ENCODE measurements at regions of chr2 and their contacts with region 1.

Region 1: GRCh38 chr2:224922142-224922727 is 120.0 kb downstream of the DOCK10 start:
- DNase-seq: no peak
- ATAC-seq: peak; percentile 63
- H3K4me3 Mint-ChIP-seq: peak overlapping the region; percentile 46
- H3K27ac Mint-ChIP-seq: peak overlapping the region; percentile 79
- H3K4me1 Mint-ChIP-seq: peaks cover 58% of the 10 kb centered on the region
- H3K27me3 Mint-ChIP-seq: no peaks in the 10 kb centered on the region
- CTCF ChIP-seq: no peak

Region 2: GRCh38 chr2:224819075-224819474 is 103.2 kb before region 1 on chr2:
- CTCF ChIA-PET with region 1: no interaction called
- POLR2A ChIA-PET with region 1: no interaction called
- intact Hi-C with region 1: no loop called
- DNase-seq: no peak
- ATAC-seq: no peak
- H3K4me3 Mint-ChIP-seq: no peak overlapping the region
- H3K27ac Mint-ChIP-seq: no peak overlapping the region
- H3K4me1 Mint-ChIP-seq: peaks cover 1% of the 10 kb centered on the region
- H3K27me3 Mint-ChIP-seq: no peaks in the 10 kb centered on the region
- CTCF ChIP-seq: no peak

Region 3: GRCh38 chr2:224909885-224910573 is 12.2 kb before region 1 on chr2:
- CTCF ChIA-PET with region 1: interaction called, 3 read pairs
- POLR2A ChIA-PET with region 1: interaction called, 17 read pairs
- intact Hi-C with region 1: loop called (anchors 1 kb)
- DNase-seq: no peak
- ATAC-seq: peak; percentile 85
- H3K4me3 Mint-ChIP-seq: peak overlapping the region; percentile 30
- H3K27ac Mint-ChIP-seq: peak overlapping the region; percentile 82
- H3K4me1 Mint-ChIP-seq: peaks cover 46% of the 10 kb centered on the region
- H3K27me3 Mint-ChIP-seq: no peaks in the 10 kb centered on the region
- CTCF ChIP-seq: no peak

Region 4: DNA sequence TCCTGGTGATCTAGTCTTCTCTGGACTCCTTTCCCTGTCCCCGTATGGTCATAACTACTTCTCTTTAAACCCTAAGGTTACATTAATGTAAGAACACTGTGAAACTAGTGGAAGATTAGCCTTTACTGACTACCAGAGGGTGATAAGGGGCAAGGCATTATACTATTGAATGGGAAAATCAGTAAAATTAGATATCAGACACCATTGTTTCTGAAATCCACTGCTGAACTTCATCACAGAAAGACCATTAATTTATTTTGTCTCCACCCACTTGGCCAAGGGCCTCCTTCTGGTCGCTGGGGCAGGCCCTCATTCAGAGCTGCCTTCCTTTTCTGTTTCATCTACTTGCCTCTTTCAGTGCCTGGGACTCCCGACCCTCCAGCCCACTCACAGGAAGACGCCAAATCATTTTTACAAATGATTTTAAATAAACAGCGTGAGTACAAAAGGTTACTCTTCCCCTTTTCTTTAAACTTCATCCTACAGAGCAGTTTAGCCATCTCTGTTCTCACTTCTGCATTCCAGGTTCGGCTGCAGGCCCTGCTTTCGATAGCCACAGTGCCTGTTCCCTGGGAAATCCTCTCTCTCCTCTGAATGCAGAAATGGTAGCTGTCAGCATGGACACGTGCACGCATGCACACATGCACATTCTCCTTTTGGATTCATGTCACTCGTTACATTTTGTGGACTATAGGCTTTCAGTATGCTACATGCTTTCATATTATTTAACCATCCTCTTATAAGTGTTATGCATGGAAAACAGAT is 190.3 kb after region 1 on chr2:
- CTCF ChIA-PET with region 1: no interaction called
- POLR2A ChIA-PET with region 1: no interaction called
- intact Hi-C with region 1: loop called (anchors 10 kb)
- DNase-seq: no peak
- ATAC-seq: peak; percentile 45
- H3K4me3 Mint-ChIP-seq: peak overlapping the region; percentile 36
- H3K27ac Mint-ChIP-seq: peak overlapping the region; percentile 62
- H3K4me1 Mint-ChIP-seq: peaks cover 24% of the 10 kb centered on the region
- H3K27me3 Mint-ChIP-seq: no peaks in the 10 kb centered on the region
- CTCF ChIP-seq: no peak

Measured in activated B cell treated with CpG ODN at 0.5 μM for 24 hours (primary cell).